AG04449 (cell line): ENCODE measurements at regions of chr2 and their contacts with region 1.

Region 1: GRCh38 chr2:46650556-46651001 is 171.2 kb downstream of the TMEM247 start:
- DNase-seq: no peak
- H3K4me3 ChIP-seq: no peak overlapping the region
- CTCF ChIP-seq: peak; percentile 76

Region 2: GRCh38 chr2:46615986-46616485 is 34.5 kb before region 1 on chr2:
- CTCF ChIA-PET with region 1: interaction called, 12 read pairs
- POLR2A ChIA-PET with region 1: no interaction called
- DNase-seq: no peak
- H3K4me3 ChIP-seq: peak overlapping the region; percentile 85
- CTCF ChIP-seq: no peak

Region 3: DNA sequence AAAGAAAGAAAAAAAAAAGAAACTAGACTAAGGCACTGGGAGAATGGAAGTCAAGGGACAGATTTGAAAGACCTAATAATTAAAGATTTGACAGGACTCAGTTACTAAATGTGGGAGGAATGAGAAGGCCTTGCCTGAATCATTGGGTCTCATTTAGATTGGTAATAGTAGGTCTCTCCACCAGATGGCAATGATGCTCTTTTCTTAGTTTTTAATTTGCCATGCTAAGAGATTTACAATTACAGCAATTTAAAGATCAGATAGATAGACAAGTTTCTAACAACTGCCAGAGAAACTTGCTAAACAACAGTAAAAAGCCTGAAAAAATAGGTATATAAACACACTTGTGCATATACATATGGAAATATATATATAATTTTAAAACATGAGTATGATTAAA is 18.2 kb before region 1 on chr2:
- CTCF ChIA-PET with region 1: interaction called, 55 read pairs
- POLR2A ChIA-PET with region 1: interaction called, 3 read pairs
- DNase-seq: no peak
- H3K4me3 ChIP-seq: no peak overlapping the region
- CTCF ChIP-seq: peak; percentile 43

Region 4: GRCh38 chr2:46666044-46666679 is 15.6 kb after region 1 on chr2:
- CTCF ChIA-PET with region 1: interaction called, 47 read pairs
- POLR2A ChIA-PET with region 1: no interaction called
- DNase-seq: no peak
- H3K4me3 ChIP-seq: no peak overlapping the region
- CTCF ChIP-seq: no peak

Region 5: GRCh38 chr2:46876741-46877384 is 226.3 kb after region 1 on chr2:
- CTCF ChIA-PET with region 1: interaction called, 96 read pairs
- POLR2A ChIA-PET with region 1: no interaction called
- DNase-seq: no peak
- H3K4me3 ChIP-seq: no peak overlapping the region
- CTCF ChIP-seq: peak; percentile 19

Region 6: DNA sequence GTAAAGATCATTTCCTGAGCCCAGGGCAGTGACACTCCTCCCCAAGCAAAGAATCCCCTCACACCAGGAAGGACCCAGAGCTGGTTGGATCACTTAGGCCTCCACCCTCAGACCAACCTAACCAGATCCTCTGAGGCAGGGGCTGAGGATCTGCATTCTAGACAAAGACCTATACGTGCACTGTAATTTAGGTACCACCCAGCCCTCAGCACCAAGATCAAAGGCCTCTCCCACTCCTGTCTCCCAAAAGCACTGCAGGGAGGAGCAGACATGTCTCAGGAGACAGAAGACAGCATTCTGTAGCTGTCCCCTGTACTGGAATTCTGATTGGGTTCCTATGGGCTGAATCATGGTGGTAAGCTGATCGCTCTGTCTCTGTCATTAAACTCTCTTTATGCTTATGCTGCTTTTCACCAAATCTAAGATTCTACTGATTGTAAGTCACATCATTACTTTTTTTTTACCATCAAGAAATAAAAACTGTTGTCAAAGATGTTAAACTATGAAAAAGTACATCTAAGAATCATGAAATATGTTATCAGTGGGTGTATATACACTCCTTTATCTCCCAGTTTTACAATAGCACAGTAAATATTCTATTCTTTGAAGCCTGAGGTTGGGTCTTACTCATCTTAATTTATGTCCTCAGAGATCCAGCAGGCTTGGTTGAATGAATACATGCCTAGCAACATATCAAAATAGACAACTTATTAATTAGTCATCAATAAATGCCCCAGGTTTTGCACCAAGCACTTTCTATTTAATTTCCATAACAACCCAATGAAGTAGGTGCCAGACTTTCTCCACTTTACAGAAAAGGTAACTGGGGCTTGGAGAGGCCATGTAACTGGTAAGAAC is 236.7 kb after region 1 on chr2:
- CTCF ChIA-PET with region 1: interaction called, 148 read pairs
- POLR2A ChIA-PET with region 1: no interaction called
- DNase-seq: no peak
- H3K4me3 ChIP-seq: no peak overlapping the region
- CTCF ChIP-seq: no peak